ENCODE measurements at regions of chr20 and their contacts with region 1.

Region 1: DNA sequence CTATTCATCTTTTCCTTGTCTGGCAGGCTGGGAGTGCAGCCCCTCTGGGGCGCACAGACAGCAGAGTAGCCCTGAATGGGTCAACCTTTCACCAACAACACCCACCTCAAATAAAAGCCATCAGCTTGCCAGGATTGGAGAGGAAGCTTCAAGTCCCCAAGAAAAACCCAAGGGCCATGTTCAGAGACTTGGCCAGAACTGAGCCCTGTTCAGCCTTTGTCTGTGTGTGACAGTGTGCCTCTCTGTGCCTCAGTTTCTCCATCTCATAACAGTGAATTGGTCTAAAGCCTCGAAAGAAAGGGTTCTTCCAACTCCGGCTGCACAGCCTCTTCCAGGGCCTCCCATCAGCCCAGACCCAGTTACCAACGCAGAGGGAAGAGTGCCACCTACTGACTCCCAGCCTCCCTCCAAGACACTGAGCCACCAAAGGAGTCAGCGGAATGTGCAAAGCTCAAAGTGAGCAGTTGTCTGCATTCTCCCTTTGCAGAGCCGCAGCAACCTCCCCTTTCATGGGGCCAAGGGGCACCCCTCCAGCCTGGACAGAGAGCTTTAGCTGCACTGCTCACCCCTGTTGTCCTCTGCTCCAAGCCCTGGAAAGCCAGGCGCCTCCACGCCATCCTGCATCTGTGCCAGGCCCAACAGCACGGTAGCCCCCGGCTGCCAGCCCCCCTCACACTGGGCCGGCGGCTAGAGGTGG is 82.7 kb upstream of the TOP1 start:
- DNase-seq: peak; percentile 52
- ATAC-seq: peak; percentile 97
- H3K4me3 ChIP-seq: no peak overlapping the region
- H3K27ac ChIP-seq: no peak overlapping the region
- H3K4me1 ChIP-seq: peaks cover 1% of the 10 kb centered on the region; the same call in 1 of the 2 replicates
- H3K27me3 ChIP-seq: no peaks in the 10 kb centered on the region
- CTCF ChIP-seq: peak; percentile 59
- POLR2A ChIP-seq: no peak
- RAD21 ChIP-seq: peak; percentile 64

Region 2: DNA sequence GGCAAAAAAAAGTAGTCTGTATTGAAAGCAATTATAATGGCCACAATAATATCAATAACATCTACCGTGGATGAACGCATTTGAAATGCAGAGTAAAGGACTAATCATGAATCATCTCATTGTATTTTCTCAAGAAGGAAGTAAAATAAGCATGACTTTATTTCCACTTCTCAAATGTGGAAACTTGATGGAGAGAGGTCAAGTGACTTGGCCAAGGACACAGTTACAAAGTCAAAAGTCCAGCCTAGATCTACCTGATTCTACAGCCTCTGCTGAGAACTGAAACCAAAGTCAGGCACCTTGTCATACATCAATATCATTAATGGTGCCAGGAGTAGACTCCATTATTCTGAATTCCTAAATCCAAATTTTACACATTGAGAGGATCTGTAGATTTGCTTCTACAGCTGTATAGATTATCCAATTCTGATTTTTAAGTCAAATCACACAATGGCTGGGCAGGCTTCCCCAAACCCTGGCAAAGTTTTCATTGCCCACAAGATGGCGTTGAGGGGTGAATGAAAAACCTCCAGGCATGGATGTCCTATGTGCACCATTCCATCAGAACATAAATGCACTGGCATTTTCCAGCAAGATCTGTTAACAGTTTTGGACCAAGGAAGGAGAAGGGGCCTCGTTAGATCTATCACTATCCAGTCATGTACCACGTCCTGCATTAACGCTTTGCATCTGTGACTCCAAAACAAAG is 679.9 kb before region 1 on chr20:
- CTCF ChIA-PET with region 1: no interaction called
- POLR2A ChIA-PET with region 1: no interaction called
- dilution Hi-C with region 1: no loop called
- in situ Hi-C with region 1: no loop called
- intact Hi-C with region 1: loop called (anchors 5 kb)
- DNase-seq: no peak
- ATAC-seq: peak; percentile 62
- H3K4me3 ChIP-seq: no peak overlapping the region
- H3K27ac ChIP-seq: no peak overlapping the region
- H3K4me1 ChIP-seq: no peaks in the 10 kb centered on the region
- H3K27me3 ChIP-seq: no peaks in the 10 kb centered on the region
- CTCF ChIP-seq: peak; percentile 15; the same call in 1 of the 2 replicates
- POLR2A ChIP-seq: no peak
- RAD21 ChIP-seq: no peak

Region 3: GRCh38 chr20:40741507-40742106 is 204.3 kb before region 1 on chr20:
- CTCF ChIA-PET with region 1: interaction called, 17 read pairs
- POLR2A ChIA-PET with region 1: no interaction called
- dilution Hi-C with region 1: no loop called
- in situ Hi-C with region 1: loop called (anchors 10 kb)
- intact Hi-C with region 1: loop called (anchors 1 kb)
- DNase-seq: peak; percentile 34
- ATAC-seq: peak; percentile 65
- H3K4me3 ChIP-seq: no peak overlapping the region
- H3K27ac ChIP-seq: no peak overlapping the region
- H3K4me1 ChIP-seq: no peaks in the 10 kb centered on the region
- H3K27me3 ChIP-seq: peaks cover 20% of the 10 kb centered on the region
- CTCF ChIP-seq: peak; percentile 53
- POLR2A ChIP-seq: no peak
- RAD21 ChIP-seq: peak; percentile 42

Region 4: GRCh38 chr20:40797425-40797824 is 148.5 kb before region 1 on chr20:
- CTCF ChIA-PET with region 1: interaction called, 3 read pairs
- POLR2A ChIA-PET with region 1: no interaction called
- dilution Hi-C with region 1: no loop called
- in situ Hi-C with region 1: no loop called
- intact Hi-C with region 1: loop called (anchors 1 kb)
- DNase-seq: peak; percentile 17
- ATAC-seq: peak; percentile 40; the same call in 1 of the 2 replicates
- H3K4me3 ChIP-seq: no peak overlapping the region
- H3K27ac ChIP-seq: no peak overlapping the region
- H3K4me1 ChIP-seq: no peaks in the 10 kb centered on the region
- H3K27me3 ChIP-seq: no peaks in the 10 kb centered on the region
- CTCF ChIP-seq: peak; percentile 51
- POLR2A ChIP-seq: no peak
- RAD21 ChIP-seq: peak; percentile 38

Region 5: DNA sequence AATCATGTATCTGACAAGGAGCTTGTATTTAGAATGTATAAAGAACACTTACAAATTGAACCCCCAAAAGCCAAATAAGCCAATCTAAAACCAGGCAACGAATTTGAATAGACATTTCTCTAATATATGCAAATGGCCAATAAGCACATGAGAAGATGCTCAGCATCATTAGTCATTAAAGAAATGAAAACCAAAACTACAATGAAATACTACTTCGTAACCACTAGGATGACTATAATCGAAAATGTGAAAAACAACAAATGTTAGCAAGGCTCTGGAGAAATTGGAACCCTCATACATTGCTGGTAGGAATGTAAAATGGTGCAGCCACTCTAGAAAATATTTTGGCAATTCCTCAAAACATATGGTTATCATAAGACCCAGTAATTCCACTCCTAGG is 23.0 kb before region 1 on chr20:
- CTCF ChIA-PET with region 1: no interaction called
- POLR2A ChIA-PET with region 1: no interaction called
- dilution Hi-C with region 1: no loop called
- in situ Hi-C with region 1: no loop called
- intact Hi-C with region 1: no loop called
- DNase-seq: no peak
- ATAC-seq: no peak
- H3K4me3 ChIP-seq: no peak overlapping the region
- H3K27ac ChIP-seq: no peak overlapping the region
- H3K4me1 ChIP-seq: no peaks in the 10 kb centered on the region
- H3K27me3 ChIP-seq: no peaks in the 10 kb centered on the region
- CTCF ChIP-seq: no peak
- POLR2A ChIP-seq: no peak
- RAD21 ChIP-seq: no peak

Region 6: DNA sequence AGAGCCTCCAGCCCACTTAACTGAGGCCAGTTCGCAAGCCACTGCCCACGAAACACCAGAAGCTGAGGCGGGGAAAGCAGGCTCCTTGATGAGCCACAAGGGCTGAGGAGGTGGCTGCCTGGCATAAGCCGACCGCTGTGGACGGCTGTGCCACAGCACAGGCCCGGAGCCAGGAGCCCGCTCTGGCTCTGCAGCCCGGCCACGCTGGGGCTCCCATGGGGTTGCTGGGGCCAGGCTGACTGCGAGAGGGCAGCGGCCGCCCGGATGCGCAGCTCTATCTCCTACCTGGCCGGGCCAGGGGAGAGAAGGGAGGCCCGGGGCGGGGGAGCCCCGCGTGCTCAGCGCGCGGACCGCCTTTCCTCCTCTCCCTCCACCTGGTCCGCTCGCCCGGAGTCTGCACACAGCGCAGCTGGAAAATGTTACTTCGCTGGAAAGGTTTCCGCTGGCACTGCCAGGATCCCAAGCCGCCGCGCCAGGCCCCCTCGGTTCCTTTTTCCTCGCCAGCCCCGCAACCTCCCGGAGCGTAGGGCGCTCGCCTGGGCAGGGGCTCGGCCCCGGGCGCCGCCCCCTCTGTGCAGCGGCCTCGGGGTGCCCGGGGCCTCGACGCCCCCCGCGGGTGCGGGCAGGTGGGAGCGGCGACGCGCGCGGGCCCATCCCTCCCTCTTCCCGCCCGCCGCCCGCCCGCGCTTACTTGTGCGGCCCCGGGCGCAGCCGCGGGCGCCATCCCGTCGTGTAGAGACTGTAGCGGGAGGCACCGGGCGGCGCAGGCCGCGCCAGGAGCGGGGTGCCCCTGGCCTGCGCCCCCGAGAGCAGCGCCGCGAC is 420.1 kb after region 1 on chr20:
- CTCF ChIA-PET with region 1: no interaction called
- POLR2A ChIA-PET with region 1: no interaction called
- dilution Hi-C with region 1: no loop called
- in situ Hi-C with region 1: no loop called
- intact Hi-C with region 1: no loop called
- DNase-seq: no peak
- ATAC-seq: peak; percentile 60
- H3K4me3 ChIP-seq: peak overlapping the region; percentile 17; the same call in 1 of the 2 replicates
- H3K27ac ChIP-seq: no peak overlapping the region
- H3K4me1 ChIP-seq: no peaks in the 10 kb centered on the region
- H3K27me3 ChIP-seq: peaks cover 59% of the 10 kb centered on the region
- CTCF ChIP-seq: no peak
- POLR2A ChIP-seq: no peak
- RAD21 ChIP-seq: no peak

Measured in IMR-90 (cell line).